T-cell (primary cell): ENCODE measurements at regions of chr20 and their contacts with region 1.

Region 1: DNA sequence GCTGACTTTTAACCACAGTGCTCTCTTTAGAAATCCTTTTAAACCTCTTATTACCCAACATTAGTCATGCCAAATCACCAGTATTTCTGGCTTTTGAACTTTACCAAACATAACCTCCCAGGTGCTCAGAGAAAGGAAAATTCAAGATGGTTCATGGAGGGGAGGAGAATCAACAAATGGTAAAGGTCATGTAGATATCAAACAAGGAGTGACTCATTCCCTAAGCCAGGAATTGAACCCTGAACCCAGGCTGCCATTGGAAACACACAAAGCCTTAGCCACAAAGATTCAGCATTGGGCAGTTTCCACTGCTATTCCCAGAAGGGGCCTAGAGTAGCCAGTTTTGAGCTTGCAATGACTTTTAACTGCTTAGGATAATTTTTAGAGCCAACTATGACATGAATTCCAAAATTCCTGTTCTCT is 21.6 kb upstream of the ENTPD6 start:
- DNase-seq: no peak
- ATAC-seq: no peak
- H3K4me3 ChIP-seq: no peak overlapping the region
- H3K4me3 Mint-ChIP-seq: no peak overlapping the region
- H3K27ac ChIP-seq: no peak overlapping the region
- H3K27ac Mint-ChIP-seq: no peak overlapping the region
- H3K4me1 ChIP-seq: no peaks in the 10 kb centered on the region
- H3K4me1 Mint-ChIP-seq: no peaks in the 10 kb centered on the region
- H3K27me3 ChIP-seq: no peaks in the 10 kb centered on the region
- H3K27me3 Mint-ChIP-seq: no peaks in the 10 kb centered on the region

Region 2: GRCh38 chr20:25390538-25391528 is 216.9 kb after region 1 on chr20 and contains the start of gene ABHD12:
- CTCF ChIA-PET with region 1: interaction called in 1 of 2 experiments, 10 read pairs
- POLR2A ChIA-PET with region 1: no interaction called
- DNase-seq: peak; percentile 85 to 96 (median 90)
- ATAC-seq: peak; percentile 90 to 94 (median 92)
- H3K4me3 ChIP-seq: peak within 1 kb of the TSS; percentile 68 to 71
- H3K4me3 Mint-ChIP-seq: peak within 1 kb of the TSS; percentile 80 to 86 (median 80)
- H3K27ac ChIP-seq: peak within 1 kb of the TSS; percentile 51
- H3K27ac Mint-ChIP-seq: peak within 1 kb of the TSS; percentile 76 to 77
- H3K4me1 ChIP-seq: peaks cover 6 to 10% of the 10 kb centered on the region in 2 experiments
- H3K4me1 Mint-ChIP-seq: peaks cover 13 to 20% (median 19%) of the 10 kb centered on the region in 3 donors
- H3K27me3 ChIP-seq: no peaks in the 10 kb centered on the region
- H3K27me3 Mint-ChIP-seq: peaks cover 0 to 4% of the 10 kb centered on the region in 2 donors
- total RNA-seq, gene ABHD12: 19.5 to 27.7 (median 22.1) TPM